ENCODE measurements at regions of chr6 and their contacts with region 1.

Region 1: GRCh38 chr6:112180095-112180820 is 74.1 kb downstream of the LAMA4 start:
- DNase-seq: no peak
- H3K4me3 ChIP-seq: no peak overlapping the region
- H3K27ac ChIP-seq: no peak overlapping the region
- H3K4me1 ChIP-seq: no peaks in the 10 kb centered on the region
- H3K27me3 ChIP-seq: no peaks in the 10 kb centered on the region
- CTCF ChIP-seq: peak in 2 of 3 experiments; percentile 58 to 64; a peak in 2 of 4 replicates
- EP300 ChIP-seq: no peak
- POLR2A ChIP-seq: no peak
- RAD21 ChIP-seq: peak; percentile 84 to 86

Region 2: DNA sequence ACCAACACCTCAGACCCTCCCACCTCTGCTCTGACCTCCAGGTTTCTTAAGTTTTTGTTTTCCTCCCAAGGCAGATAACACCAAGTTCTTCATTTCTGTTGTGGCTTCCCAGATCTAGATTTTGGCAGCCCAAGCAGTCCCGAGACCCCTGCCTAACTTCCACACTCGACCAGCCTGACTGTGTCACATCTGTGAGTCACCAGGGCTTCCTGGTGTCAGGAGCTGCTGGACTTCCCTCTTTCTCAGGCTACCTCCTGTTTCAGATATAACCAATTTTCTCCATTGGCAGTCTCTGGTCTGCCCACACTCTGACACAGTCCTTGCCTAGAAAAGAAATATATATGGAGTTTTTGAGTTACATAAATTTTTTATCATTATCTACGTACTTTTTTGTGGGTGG is 172.5 kb before region 1 on chr6:
- CTCF ChIA-PET with region 1: no interaction called
- POLR2A ChIA-PET with region 1: no interaction called
- DNase-seq: no peak
- H3K4me3 ChIP-seq: no peak overlapping the region
- H3K27ac ChIP-seq: no peak overlapping the region
- H3K4me1 ChIP-seq: no peaks in the 10 kb centered on the region
- H3K27me3 ChIP-seq: no peaks in the 10 kb centered on the region
- CTCF ChIP-seq: no peak
- EP300 ChIP-seq: no peak
- POLR2A ChIP-seq: no peak
- RAD21 ChIP-seq: no peak

Region 3: GRCh38 chr6:112153926-112154607 is 26.2 kb before region 1 on chr6:
- CTCF ChIA-PET with region 1: no interaction called
- POLR2A ChIA-PET with region 1: no interaction called
- DNase-seq: no peak
- H3K4me3 ChIP-seq: no peak overlapping the region
- H3K27ac ChIP-seq: no peak overlapping the region
- H3K4me1 ChIP-seq: peaks cover 0 to 2% (median 0%) of the 10 kb centered on the region in 4 experiments; a peak in 1 of 7 replicates
- H3K27me3 ChIP-seq: no peaks in the 10 kb centered on the region
- CTCF ChIP-seq: no peak
- EP300 ChIP-seq: no peak
- POLR2A ChIP-seq: no peak
- RAD21 ChIP-seq: no peak

Region 4: DNA sequence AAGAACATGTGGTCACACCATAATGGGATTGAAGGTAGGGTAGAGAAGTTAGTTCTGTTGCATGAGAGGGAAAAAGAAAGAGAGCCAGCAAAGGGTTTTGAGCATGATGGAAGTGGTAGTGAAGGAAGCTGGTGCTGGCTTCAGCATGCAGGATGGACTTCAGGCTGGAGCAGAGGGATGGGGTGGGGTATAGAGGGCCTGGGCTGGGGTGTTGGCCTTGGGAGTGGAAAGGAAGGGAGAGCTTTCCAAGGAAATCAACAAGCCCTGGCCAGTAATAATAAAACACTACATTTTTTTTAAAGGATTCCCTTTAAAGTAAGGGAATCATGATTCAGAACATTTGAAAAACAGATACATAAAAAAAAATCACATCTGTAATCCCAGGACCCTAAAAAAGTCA is 12.9 kb after region 1 on chr6:
- CTCF ChIA-PET with region 1: interaction called, 23 read pairs
- POLR2A ChIA-PET with region 1: no interaction called
- DNase-seq: no peak
- H3K4me3 ChIP-seq: no peak overlapping the region
- H3K27ac ChIP-seq: no peak overlapping the region
- H3K4me1 ChIP-seq: no peaks in the 10 kb centered on the region; a peak in 2 of 7 replicates
- H3K27me3 ChIP-seq: no peaks in the 10 kb centered on the region
- CTCF ChIP-seq: no peak
- EP300 ChIP-seq: no peak
- POLR2A ChIP-seq: no peak
- RAD21 ChIP-seq: no peak

Region 5: GRCh38 chr6:112245511-112246203 is 65.4 kb after region 1 on chr6:
- CTCF ChIA-PET with region 1: interaction called, 10 read pairs
- POLR2A ChIA-PET with region 1: no interaction called
- DNase-seq: no peak
- H3K4me3 ChIP-seq: no peak overlapping the region
- H3K27ac ChIP-seq: no peak overlapping the region
- H3K4me1 ChIP-seq: peaks cover 0 to 7% (median 3%) of the 10 kb centered on the region in 4 experiments; a peak in 4 of 7 replicates
- H3K27me3 ChIP-seq: no peaks in the 10 kb centered on the region
- CTCF ChIP-seq: no peak
- EP300 ChIP-seq: no peak
- POLR2A ChIP-seq: no peak
- RAD21 ChIP-seq: no peak

Region 6: GRCh38 chr6:112269114-112269513 is 88.9 kb after region 1 on chr6:
- CTCF ChIA-PET with region 1: interaction called, 33 read pairs
- POLR2A ChIA-PET with region 1: no interaction called
- DNase-seq: no peak
- H3K4me3 ChIP-seq: no peak overlapping the region
- H3K27ac ChIP-seq: no peak overlapping the region
- H3K4me1 ChIP-seq: no peaks in the 10 kb centered on the region
- H3K27me3 ChIP-seq: no peaks in the 10 kb centered on the region
- CTCF ChIP-seq: peak in 2 of 3 experiments; percentile 39 to 45; a peak in 2 of 4 replicates
- EP300 ChIP-seq: no peak
- POLR2A ChIP-seq: no peak
- RAD21 ChIP-seq: peak; percentile 48 to 55

Region 7: GRCh38 chr6:112289038-112289566 is 108.8 kb after region 1 on chr6:
- CTCF ChIA-PET with region 1: interaction called, 26 read pairs
- POLR2A ChIA-PET with region 1: no interaction called
- DNase-seq: no peak
- H3K4me3 ChIP-seq: no peak overlapping the region
- H3K27ac ChIP-seq: no peak overlapping the region
- H3K4me1 ChIP-seq: no peaks in the 10 kb centered on the region
- H3K27me3 ChIP-seq: no peaks in the 10 kb centered on the region
- CTCF ChIP-seq: no peak
- EP300 ChIP-seq: no peak
- POLR2A ChIP-seq: no peak
- RAD21 ChIP-seq: no peak

Region 8: GRCh38 chr6:112311950-112312547 is 131.8 kb after region 1 on chr6:
- CTCF ChIA-PET with region 1: interaction called, 101 read pairs
- POLR2A ChIA-PET with region 1: no interaction called
- DNase-seq: no peak
- H3K4me3 ChIP-seq: no peak overlapping the region
- H3K27ac ChIP-seq: no peak overlapping the region
- H3K4me1 ChIP-seq: no peaks in the 10 kb centered on the region
- H3K27me3 ChIP-seq: no peaks in the 10 kb centered on the region
- CTCF ChIP-seq: peak in 2 of 3 experiments; percentile 38 to 62; a peak in 3 of 4 replicates
- EP300 ChIP-seq: no peak
- POLR2A ChIP-seq: no peak
- RAD21 ChIP-seq: peak; percentile 75

Region 9: GRCh38 chr6:112429226-112429625 is 249.0 kb after region 1 on chr6:
- CTCF ChIA-PET with region 1: no interaction called
- POLR2A ChIA-PET with region 1: no interaction called
- DNase-seq: peak in 1 of 2 experiments; percentile 33
- H3K4me3 ChIP-seq: no peak overlapping the region
- H3K27ac ChIP-seq: no peak overlapping the region
- H3K4me1 ChIP-seq: peaks cover 0 to 3% (median 0%) of the 10 kb centered on the region in 4 experiments; a peak in 1 of 7 replicates
- H3K27me3 ChIP-seq: no peaks in the 10 kb centered on the region
- CTCF ChIP-seq: peak in 2 of 3 experiments; percentile 48 to 57; a peak in 3 of 4 replicates
- EP300 ChIP-seq: no peak
- POLR2A ChIP-seq: no peak
- RAD21 ChIP-seq: peak; percentile 76 to 79

Region 10: DNA sequence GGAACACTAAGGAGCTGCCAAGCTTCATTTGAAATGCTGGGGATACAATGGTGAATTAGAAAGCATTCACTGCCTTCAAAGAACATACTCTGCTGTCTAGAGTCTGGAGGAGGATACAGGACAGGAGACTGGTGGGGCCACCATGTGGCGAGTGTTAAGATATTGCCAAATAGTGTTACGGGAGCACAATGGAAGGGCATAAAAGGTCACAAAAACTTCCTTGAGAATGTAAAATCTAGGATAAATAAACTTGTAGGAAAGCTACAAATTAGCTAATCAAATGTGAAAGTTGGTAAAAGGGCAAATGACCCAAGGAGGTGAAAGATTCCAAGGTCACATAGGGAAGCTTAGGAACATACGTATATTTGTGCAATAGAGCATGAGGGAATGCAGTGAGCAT is 438.6 kb after region 1 on chr6:
- CTCF ChIA-PET with region 1: interaction called, 10 read pairs
- POLR2A ChIA-PET with region 1: no interaction called
- DNase-seq: no peak
- H3K4me3 ChIP-seq: no peak overlapping the region
- H3K27ac ChIP-seq: no peak overlapping the region
- H3K4me1 ChIP-seq: peaks cover 0 to 2% (median 0%) of the 10 kb centered on the region in 4 experiments; a peak in 1 of 7 replicates
- H3K27me3 ChIP-seq: no peaks in the 10 kb centered on the region
- CTCF ChIP-seq: peak; percentile 20 to 58 (median 44)
- EP300 ChIP-seq: no peak
- POLR2A ChIP-seq: no peak
- RAD21 ChIP-seq: peak; percentile 71 to 77

Measured in H1 (cell line).